Kidney (tissue), 22 donors: ENCODE measurements at regions of chr1 and their contacts with region 1.

Region 1: DNA sequence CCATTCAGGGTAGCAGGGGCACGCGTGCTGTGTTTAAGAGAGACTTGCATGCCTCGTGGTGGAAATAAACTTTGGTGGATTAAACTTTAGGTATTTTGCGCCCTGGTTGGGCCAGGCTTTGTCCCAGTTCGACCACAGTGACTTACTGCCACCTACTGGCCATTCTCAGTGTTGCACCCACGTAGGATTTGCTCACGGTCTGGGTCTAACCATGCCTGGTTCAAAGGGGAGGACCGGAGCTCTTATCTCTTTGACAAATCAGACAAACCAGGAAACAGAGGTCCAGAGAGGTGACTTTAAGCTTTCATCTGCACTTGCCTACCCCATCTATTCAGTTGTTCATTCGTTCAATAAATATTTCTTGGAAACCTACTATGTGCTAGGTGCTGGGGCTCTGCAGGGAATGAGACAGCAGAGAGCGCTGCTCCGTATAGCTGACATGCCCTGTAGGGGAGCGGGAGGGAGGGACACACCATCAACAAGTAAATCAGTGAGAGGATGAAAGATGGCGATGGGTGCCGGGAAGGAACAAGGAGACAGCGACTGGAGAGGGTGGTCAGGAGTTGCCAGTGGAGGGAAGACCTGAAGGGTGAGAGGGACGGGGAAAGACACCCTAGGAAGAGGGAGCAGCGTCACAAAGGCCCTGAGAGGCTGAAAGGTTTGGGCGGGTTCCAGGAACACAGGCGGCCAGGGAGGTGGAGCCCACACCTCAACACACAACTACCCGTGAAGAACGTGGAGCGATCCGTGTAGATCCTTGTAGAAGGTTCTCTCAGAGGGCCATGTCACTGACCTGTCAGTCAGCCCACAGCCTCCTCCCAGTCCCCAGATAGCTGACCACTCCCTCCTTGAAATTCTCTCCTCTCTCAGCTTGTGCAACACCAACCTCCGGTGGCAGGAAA is 27.2 kb upstream of the TINAGL1 start:
- DNase-seq: peak; percentile 91 to 95 (median 93)
- H3K4me3 ChIP-seq: peak overlapping the region in 2 of 3 donors; percentile 43 to 60
- H3K27ac ChIP-seq: peak overlapping the region; percentile 52 to 78
- H3K4me1 ChIP-seq: peaks cover 0 to 12% (median 10%) of the 10 kb centered on the region in 3 donors
- H3K27me3 ChIP-seq: peaks cover 2% of the 10 kb centered on the region
- CTCF ChIP-seq: peak; percentile 97

Region 2: DNA sequence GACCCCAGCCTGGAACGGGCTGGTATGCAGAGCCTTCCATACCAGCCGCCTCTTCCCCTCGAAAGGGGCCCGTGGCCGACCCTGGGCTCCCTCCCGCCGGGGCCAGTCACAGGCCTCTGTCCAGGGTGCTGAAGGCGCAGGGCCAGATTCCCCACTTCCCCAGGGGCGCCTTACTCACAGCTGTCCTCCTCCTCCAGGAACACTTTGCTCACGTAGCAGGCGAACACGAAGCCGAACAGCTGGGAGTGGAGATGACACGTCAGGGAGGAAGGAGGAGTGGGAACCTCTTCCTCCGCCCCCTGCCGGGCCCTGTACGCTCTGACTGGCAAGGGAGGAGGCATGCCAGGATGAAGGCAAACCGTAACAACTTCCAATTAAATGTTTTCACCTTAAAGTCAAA is 366.8 kb before region 1 on chr1:
- intact Hi-C with region 1: no loop called
- DNase-seq: peak; percentile 91 to 97 (median 94)
- H3K4me3 ChIP-seq: no peak overlapping the region
- H3K27ac ChIP-seq: no peak overlapping the region
- H3K4me1 ChIP-seq: peaks cover 0 to 6% (median 0%) of the 10 kb centered on the region in 3 donors
- H3K27me3 ChIP-seq: no peaks in the 10 kb centered on the region
- CTCF ChIP-seq: peak; percentile 5

Region 3: GRCh38 chr1:31460027-31460426 is 89.1 kb before region 1 on chr1:
- intact Hi-C with region 1: loop called (anchors 10 kb)
- DNase-seq: no peak
- H3K4me3 ChIP-seq: no peak overlapping the region
- H3K27ac ChIP-seq: no peak overlapping the region
- H3K4me1 ChIP-seq: no peaks in the 10 kb centered on the region
- H3K27me3 ChIP-seq: no peaks in the 10 kb centered on the region
- CTCF ChIP-seq: peak; percentile 22

Region 4: GRCh38 chr1:31593770-31594632 is 44.8 kb after region 1 on chr1:
- intact Hi-C with region 1: loop called (anchors 5 kb)
- DNase-seq: peak; percentile 69 to 91 (median 82)
- H3K4me3 ChIP-seq: no peak overlapping the region
- H3K27ac ChIP-seq: no peak overlapping the region
- H3K4me1 ChIP-seq: peaks cover 0 to 5% (median 0%) of the 10 kb centered on the region in 3 donors
- H3K27me3 ChIP-seq: no peaks in the 10 kb centered on the region
- CTCF ChIP-seq: peak; percentile 81